ENCODE measurements at regions of chr2 and their contacts with region 1.

Region 1: DNA sequence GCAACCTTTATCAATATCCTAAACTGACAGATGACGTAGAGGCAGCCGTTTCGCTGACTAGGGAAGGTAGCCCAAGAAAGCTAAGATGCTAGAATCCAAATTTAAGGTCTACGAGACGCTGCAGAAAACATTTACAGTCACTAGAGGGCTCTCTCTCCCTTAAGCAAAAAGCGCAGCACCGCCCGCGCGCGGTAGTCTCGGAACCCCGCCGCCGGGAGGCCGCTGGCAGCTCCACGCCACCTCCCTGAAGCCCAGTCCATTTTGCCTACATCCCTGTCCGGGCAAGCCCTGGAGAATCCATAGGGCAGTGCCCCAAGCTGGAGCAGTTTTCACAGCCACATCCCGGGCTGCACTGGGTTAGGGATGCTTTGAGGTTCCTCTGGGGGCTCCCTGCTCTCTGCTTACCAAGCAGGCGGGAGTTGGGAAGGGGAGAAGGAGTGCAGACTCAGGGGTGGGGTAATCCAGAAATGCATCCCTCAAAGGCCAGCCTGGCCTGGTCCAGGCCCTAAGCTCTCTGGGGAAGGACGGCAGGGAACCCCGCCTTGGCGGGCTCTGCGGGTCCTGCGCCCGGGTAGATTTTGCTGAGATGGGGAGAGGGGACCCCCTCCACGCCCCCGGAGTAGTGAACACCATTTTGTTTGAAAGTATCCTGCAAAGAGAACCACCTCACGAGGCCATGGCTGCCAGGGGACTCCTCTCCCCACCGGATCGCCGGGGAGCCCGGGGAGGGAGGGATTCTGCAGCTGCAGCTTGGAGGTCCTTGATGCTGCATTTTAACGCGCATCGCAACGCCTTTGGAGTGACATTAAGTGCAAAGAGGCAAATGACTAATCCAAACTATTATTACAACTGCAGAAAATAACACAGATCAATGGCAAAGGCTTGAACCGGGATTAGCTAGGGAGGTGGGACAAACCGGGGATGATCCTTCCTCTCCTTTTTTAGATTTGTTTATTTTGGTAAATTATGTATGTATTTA is 1.3 kb upstream of the DPYSL5 start:
- DNase-seq: peak in 8 of 9 experiments; percentile 31 to 77 (median 60)
- ATAC-seq: peak; percentile 81
- H3K4me3 ChIP-seq: no peak overlapping the region
- H3K4me3 Mint-ChIP-seq: peak overlapping the region; percentile 75
- H3K27ac ChIP-seq: no peak overlapping the region
- H3K27ac Mint-ChIP-seq: no peak overlapping the region
- H3K4me1 ChIP-seq: peaks cover 32% of the 10 kb centered on the region
- H3K4me1 Mint-ChIP-seq: peaks cover 20% of the 10 kb centered on the region
- H3K27me3 ChIP-seq: peaks cover 31 to 43% of the 10 kb centered on the region in 2 experiments
- H3K27me3 Mint-ChIP-seq: peaks cover 57% of the 10 kb centered on the region
- CTCF ChIP-seq: peak; percentile 56

Region 2: GRCh38 chr2:26861610-26862224 is 15.1 kb after region 1 on chr2:
- CTCF ChIA-PET with region 1: interaction called, 11 read pairs
- POLR2A ChIA-PET with region 1: no interaction called
- intact Hi-C with region 1: no loop called
- DNase-seq: no peak
- ATAC-seq: no peak
- H3K4me3 ChIP-seq: no peak overlapping the region
- H3K4me3 Mint-ChIP-seq: no peak overlapping the region
- H3K27ac ChIP-seq: no peak overlapping the region
- H3K27ac Mint-ChIP-seq: no peak overlapping the region
- H3K4me1 ChIP-seq: no peaks in the 10 kb centered on the region
- H3K4me1 Mint-ChIP-seq: no peaks in the 10 kb centered on the region
- H3K27me3 ChIP-seq: no peaks in the 10 kb centered on the region
- H3K27me3 Mint-ChIP-seq: peaks cover 30% of the 10 kb centered on the region
- CTCF ChIP-seq: no peak

Region 3: GRCh38 chr2:26901326-26902183 is 54.9 kb after region 1 on chr2:
- CTCF ChIA-PET with region 1: no interaction called
- POLR2A ChIA-PET with region 1: no interaction called
- intact Hi-C with region 1: no loop called
- DNase-seq: no peak
- ATAC-seq: no peak
- H3K4me3 ChIP-seq: no peak overlapping the region
- H3K4me3 Mint-ChIP-seq: no peak overlapping the region
- H3K27ac ChIP-seq: no peak overlapping the region
- H3K27ac Mint-ChIP-seq: no peak overlapping the region
- H3K4me1 ChIP-seq: no peaks in the 10 kb centered on the region
- H3K4me1 Mint-ChIP-seq: no peaks in the 10 kb centered on the region
- H3K27me3 ChIP-seq: no peaks in the 10 kb centered on the region
- H3K27me3 Mint-ChIP-seq: peaks cover 12% of the 10 kb centered on the region
- CTCF ChIP-seq: no peak

Region 4: DNA sequence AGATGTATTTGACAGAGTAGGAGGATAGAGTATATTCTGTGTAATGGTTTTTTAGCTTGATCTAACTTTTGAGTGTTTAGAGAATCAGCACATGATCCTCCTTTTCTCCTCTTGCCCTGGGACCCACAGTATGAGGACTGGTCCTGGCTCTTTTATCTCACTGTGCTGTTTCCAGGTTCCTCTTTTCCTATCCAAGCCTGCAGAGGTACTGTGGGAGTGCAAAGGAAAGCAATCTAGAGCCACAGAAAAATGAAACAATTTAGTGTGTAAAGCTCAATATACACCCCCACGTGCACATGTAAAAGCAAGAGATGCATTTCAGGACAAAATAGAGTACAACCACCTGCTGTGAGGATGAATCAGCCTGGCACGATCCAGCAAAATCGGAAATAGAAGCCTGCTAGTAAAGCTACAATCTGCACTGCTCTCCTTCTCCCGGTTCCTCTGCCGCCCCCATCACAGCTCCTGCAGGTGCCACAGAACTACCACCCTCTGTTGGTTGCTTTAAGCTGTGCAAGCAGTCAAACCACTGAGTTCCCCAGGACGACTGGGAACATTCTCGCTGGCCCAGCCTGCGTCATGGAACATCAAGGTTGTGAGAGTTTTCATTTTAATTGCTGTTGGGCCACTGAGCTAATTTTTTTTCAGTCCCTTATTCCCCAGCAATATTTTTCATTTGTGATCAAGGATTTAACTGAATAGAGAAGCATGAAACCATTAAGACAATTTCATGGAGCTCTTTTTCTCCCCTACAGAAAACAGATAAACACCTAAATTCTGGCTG is 76.0 kb after region 1 on chr2:
- CTCF ChIA-PET with region 1: interaction called, 38 read pairs
- POLR2A ChIA-PET with region 1: no interaction called
- intact Hi-C with region 1: loop called (anchors 1 kb)
- DNase-seq: peak in 8 of 9 experiments; percentile 13 to 61 (median 38)
- ATAC-seq: peak; percentile 67
- H3K4me3 ChIP-seq: no peak overlapping the region
- H3K4me3 Mint-ChIP-seq: no peak overlapping the region
- H3K27ac ChIP-seq: no peak overlapping the region
- H3K27ac Mint-ChIP-seq: no peak overlapping the region
- H3K4me1 ChIP-seq: no peaks in the 10 kb centered on the region
- H3K4me1 Mint-ChIP-seq: peaks cover 6% of the 10 kb centered on the region
- H3K27me3 ChIP-seq: no peaks in the 10 kb centered on the region
- H3K27me3 Mint-ChIP-seq: peaks cover 28% of the 10 kb centered on the region
- CTCF ChIP-seq: peak; percentile 68

Region 5: DNA sequence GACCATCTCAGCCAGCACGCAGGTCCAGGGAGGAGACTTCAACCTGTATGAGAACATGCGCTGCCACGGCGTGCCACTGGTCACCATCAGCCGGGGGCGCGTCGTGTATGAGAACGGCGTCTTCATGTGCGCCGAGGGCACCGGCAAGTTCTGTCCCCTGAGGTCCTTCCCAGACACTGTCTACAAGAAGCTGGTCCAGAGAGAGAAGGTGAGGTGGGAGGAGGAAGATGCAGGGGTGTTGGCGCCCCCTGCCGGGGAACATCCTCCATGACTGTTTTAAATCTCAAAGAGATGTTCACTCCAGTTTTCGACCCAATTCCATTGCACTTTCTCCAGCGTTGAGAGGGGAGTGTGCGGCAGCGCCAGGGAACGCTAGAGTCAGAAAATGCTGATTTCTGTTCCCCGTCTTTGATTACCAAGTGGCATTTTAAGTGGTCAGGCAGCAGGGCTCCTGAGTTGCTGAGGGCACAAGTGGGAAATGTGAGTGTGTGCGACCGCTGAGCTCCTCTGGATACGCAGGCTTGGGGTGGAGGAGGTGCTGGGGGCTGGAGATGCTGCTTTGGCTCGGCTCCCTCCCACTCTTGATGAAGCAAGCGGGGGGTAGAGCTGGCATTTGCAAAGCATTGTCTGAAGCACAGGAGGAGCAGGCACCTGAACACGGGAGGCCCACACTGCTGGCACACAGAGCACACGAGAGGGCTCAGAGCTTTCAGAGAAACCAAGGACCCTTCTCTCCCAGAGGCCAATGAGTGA is 96.1 kb after region 1 on chr2:
- CTCF ChIA-PET with region 1: interaction called, 88 read pairs
- POLR2A ChIA-PET with region 1: no interaction called
- intact Hi-C with region 1: loop called in 1 of 2 experiments (anchors 1 kb)
- DNase-seq: peak; percentile 15 to 73 (median 60)
- ATAC-seq: peak; percentile 51
- H3K4me3 ChIP-seq: no peak overlapping the region
- H3K4me3 Mint-ChIP-seq: no peak overlapping the region
- H3K27ac ChIP-seq: no peak overlapping the region
- H3K27ac Mint-ChIP-seq: no peak overlapping the region
- H3K4me1 ChIP-seq: no peaks in the 10 kb centered on the region
- H3K4me1 Mint-ChIP-seq: peaks cover 4% of the 10 kb centered on the region
- H3K27me3 ChIP-seq: no peaks in the 10 kb centered on the region
- H3K27me3 Mint-ChIP-seq: peaks cover 10% of the 10 kb centered on the region
- CTCF ChIP-seq: peak; percentile 88

Region 6: GRCh38 chr2:27016801-27017325 is 170.2 kb after region 1 on chr2:
- CTCF ChIA-PET with region 1: interaction called, 7 read pairs
- POLR2A ChIA-PET with region 1: no interaction called
- intact Hi-C with region 1: loop called (anchors 1 to 5 kb)
- DNase-seq: peak in 8 of 9 experiments; percentile 21 to 64 (median 53)
- ATAC-seq: peak; percentile 54
- H3K4me3 ChIP-seq: no peak overlapping the region
- H3K4me3 Mint-ChIP-seq: no peak overlapping the region
- H3K27ac ChIP-seq: no peak overlapping the region
- H3K27ac Mint-ChIP-seq: no peak overlapping the region
- H3K4me1 ChIP-seq: no peaks in the 10 kb centered on the region
- H3K4me1 Mint-ChIP-seq: no peaks in the 10 kb centered on the region
- H3K27me3 ChIP-seq: no peaks in the 10 kb centered on the region
- H3K27me3 Mint-ChIP-seq: no peaks in the 10 kb centered on the region
- CTCF ChIP-seq: peak; percentile 47

Region 7: GRCh38 chr2:27191053-27191829 is 344.6 kb after region 1 on chr2:
- CTCF ChIA-PET with region 1: no interaction called
- POLR2A ChIA-PET with region 1: no interaction called
- intact Hi-C with region 1: loop called in 1 of 2 experiments (anchors 2 kb)
- DNase-seq: peak in 6 of 9 experiments; percentile 19 to 71 (median 50)
- ATAC-seq: peak; percentile 92
- H3K4me3 ChIP-seq: no peak overlapping the region
- H3K4me3 Mint-ChIP-seq: no peak overlapping the region
- H3K27ac ChIP-seq: no peak overlapping the region
- H3K27ac Mint-ChIP-seq: no peak overlapping the region
- H3K4me1 ChIP-seq: no peaks in the 10 kb centered on the region
- H3K4me1 Mint-ChIP-seq: no peaks in the 10 kb centered on the region
- H3K27me3 ChIP-seq: no peaks in the 10 kb centered on the region
- H3K27me3 Mint-ChIP-seq: peaks cover 9% of the 10 kb centered on the region
- CTCF ChIP-seq: peak; percentile 42

Region 8: GRCh38 chr2:27453967-27454366 is 607.4 kb after region 1 on chr2:
- CTCF ChIA-PET with region 1: no interaction called
- POLR2A ChIA-PET with region 1: no interaction called
- intact Hi-C with region 1: no loop called
- DNase-seq: no peak
- ATAC-seq: no peak
- H3K4me3 ChIP-seq: no peak overlapping the region
- H3K4me3 Mint-ChIP-seq: no peak overlapping the region
- H3K27ac ChIP-seq: no peak overlapping the region
- H3K27ac Mint-ChIP-seq: no peak overlapping the region
- H3K4me1 ChIP-seq: no peaks in the 10 kb centered on the region
- H3K4me1 Mint-ChIP-seq: no peaks in the 10 kb centered on the region
- H3K27me3 ChIP-seq: no peaks in the 10 kb centered on the region
- H3K27me3 Mint-ChIP-seq: no peaks in the 10 kb centered on the region
- CTCF ChIP-seq: no peak